ENCODE measurements at regions of chr16 and their contacts with region 1.

Region 1: GRCh38 chr16:19907161-19907992 is 22.7 kb upstream of the GPRC5B start:
- DNase-seq: peak; percentile 87
- H3K4me3 ChIP-seq: peak overlapping the region in 1 of 8 donors; percentile 30
- H3K27ac ChIP-seq: no peak overlapping the region
- H3K4me1 ChIP-seq: peaks cover 0 to 8% (median 5%) of the 10 kb centered on the region in 6 donors
- H3K27me3 ChIP-seq: peaks cover 0 to 58% (median 9%) of the 10 kb centered on the region in 7 donors
- CTCF ChIP-seq: peak; percentile 69 to 97 (median 93)
- POLR2A ChIP-seq: no peak

Region 2: GRCh38 chr16:19963301-19963700 is 55.9 kb after region 1 on chr16:
- intact Hi-C with region 1: no loop called
- DNase-seq: no peak
- H3K4me3 ChIP-seq: no peak overlapping the region
- H3K27ac ChIP-seq: no peak overlapping the region
- H3K4me1 ChIP-seq: no peaks in the 10 kb centered on the region
- H3K27me3 ChIP-seq: peaks cover 0 to 14% (median 0%) of the 10 kb centered on the region in 7 donors
- CTCF ChIP-seq: no peak
- POLR2A ChIP-seq: no peak

Region 3: DNA sequence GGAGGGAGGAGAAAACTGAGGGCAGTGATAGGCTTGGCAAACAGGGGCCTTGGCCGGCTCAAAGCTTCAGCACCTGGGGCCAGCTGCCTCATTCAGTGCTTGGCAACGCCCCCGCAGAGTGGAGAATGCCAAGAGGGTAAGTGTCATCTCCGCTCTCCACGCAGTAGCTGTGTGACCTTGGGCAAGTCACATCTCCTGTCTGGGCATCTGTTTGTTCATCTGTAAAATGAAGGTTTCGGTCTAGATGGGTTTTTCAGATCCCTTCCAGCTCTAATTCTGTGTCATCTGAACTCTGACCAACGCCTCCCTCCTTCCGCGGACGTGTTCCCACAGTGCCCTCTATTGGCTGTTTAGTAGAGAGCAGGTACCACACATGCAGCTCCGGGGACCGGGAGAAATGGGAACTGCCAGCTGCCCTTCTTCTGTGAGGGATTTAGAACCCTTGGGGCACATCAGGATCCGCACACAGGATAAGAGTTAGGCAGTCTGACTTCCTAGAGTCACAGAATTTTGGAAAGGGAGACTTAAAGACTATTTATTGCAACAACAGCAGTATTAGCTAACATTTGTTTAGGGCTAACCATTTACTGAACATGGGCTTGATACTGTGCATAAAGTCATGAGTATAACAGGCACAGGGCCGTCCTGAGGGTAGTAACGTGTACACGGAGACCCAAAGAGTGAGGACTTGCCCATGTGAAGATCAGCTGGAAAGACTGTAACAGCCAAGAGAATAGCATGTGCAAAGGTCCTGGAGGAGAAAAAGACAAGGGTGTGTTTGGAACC is 393.1 kb after region 1 on chr16:
- intact Hi-C with region 1: loop called (anchors 5 kb)
- DNase-seq: no peak
- H3K4me3 ChIP-seq: no peak overlapping the region
- H3K27ac ChIP-seq: no peak overlapping the region
- H3K4me1 ChIP-seq: no peaks in the 10 kb centered on the region
- H3K27me3 ChIP-seq: peaks cover 0 to 31% (median 0%) of the 10 kb centered on the region in 7 donors
- CTCF ChIP-seq: peak in 9 of 11 experiments; percentile 45 to 74 (median 57)
- POLR2A ChIP-seq: no peak

Region 4: DNA sequence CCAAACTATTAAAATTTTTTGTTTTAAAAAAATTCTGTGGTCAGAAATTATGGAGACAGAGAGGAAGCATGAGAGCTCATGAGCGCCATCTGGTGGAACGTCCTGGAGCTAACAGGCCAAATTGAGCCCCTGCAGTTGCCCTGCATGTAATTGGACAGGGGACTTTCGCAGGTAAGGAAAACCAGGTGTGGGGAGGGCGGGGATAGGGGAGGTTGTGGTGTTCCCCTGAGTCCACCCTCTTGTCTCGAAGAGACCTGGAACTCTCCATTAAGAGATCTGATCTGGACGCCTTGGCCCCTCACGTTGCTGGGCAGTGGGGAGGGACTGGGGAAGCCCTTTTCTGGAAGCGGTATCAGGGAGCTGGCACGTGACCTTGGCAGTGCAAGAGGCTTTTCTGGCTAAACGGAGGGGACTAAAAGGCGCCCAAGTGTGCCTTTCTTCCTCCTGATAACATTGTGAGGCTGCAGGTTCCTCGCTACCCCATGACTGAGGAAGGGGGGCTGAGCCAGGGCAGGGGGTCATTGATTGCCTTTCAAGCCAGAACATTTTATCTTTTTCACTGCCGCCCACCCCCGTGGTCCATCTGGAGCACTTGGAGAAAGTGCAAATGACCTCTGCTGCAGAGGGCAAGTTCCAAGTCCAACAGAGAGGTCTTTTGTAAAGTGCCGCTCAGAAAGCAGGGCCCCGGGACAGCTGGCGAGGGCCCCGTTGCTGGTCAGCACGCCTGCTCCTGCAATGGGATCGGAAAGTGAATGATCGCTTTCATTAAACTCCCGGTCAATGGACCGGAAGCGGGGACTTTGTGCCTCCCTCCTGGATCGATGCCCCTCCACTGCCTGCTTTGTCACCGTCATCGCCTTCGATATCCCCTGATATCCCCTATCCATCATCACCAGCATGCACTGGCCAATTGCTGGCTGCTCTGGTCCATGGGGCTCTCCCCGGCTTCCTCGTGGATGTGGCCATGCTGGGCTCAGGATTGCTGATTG is 478.8 kb after region 1 on chr16:
- intact Hi-C with region 1: loop called (anchors 5 kb)
- DNase-seq: peak; percentile 82
- H3K4me3 ChIP-seq: no peak overlapping the region
- H3K27ac ChIP-seq: peak overlapping the region in 1 of 8 donors; percentile 28
- H3K4me1 ChIP-seq: peaks cover 0 to 18% (median 4%) of the 10 kb centered on the region in 6 donors
- H3K27me3 ChIP-seq: peaks cover 0 to 21% (median 0%) of the 10 kb centered on the region in 7 donors
- CTCF ChIP-seq: peak in 9 of 11 experiments; percentile 44 to 90 (median 82)
- POLR2A ChIP-seq: no peak

Measured in spleen (tissue), 13 donors.